ENCODE measurements at regions of chr4 and their contacts with region 1.

Region 1: DNA sequence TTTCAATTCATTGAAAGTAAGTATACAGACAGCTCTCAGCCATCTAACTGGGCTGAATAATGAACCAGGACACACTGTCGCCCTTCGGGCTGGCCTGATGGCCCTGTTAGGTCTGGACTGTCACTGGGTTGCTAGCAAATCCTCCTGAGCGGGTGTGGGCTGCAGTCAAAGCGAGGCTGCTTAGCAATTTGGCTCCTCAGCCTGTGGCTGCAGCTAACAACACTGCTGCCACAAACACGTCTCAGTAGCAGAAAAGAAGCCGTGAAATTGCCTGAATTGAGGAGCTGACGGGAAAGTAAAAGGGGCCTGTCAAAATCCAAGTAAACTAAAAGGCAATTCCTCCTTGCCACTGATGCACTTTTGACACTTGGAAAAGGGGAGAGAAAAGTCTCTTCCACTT is 72.8 kb downstream of the SMIM20 start:
- DNase-seq: no peak
- ATAC-seq: no peak
- H3K4me3 ChIP-seq: no peak overlapping the region
- H3K27ac ChIP-seq: no peak overlapping the region
- H3K4me1 ChIP-seq: peaks cover 5% of the 10 kb centered on the region
- H3K27me3 ChIP-seq: no peaks in the 10 kb centered on the region
- CTCF ChIP-seq: no peak
- EP300 ChIP-seq: no peak
- POLR2A ChIP-seq: no peak
- RAD21 ChIP-seq: no peak

Region 2: DNA sequence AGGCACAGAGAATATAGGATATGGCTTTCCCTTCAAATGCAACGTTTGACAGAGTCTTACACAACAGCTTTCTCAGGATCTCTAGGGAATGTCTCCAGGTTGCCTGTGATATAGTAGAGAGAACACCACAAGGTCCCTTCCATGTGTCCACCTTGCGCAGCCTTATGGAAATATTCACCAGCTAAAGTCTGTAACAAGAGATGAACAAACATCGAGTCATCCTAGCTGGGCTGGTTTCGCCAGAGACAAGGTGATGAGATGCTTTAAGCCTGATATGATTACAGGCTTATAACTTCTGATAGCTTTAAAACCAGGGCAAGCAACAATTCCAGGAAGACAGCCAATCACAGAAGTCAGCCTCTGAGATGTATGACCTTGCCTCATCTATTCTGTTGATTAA is 207.8 kb before region 1 on chr4:
- CTCF ChIA-PET with region 1: no interaction called
- POLR2A ChIA-PET with region 1: no interaction called
- RAD21 ChIA-PET with region 1: no interaction called
- SMC1A ChIA-PET with region 1: no interaction called
- in situ Hi-C with region 1: no loop called
- intact Hi-C with region 1: no loop called
- DNase-seq: no peak
- ATAC-seq: no peak
- H3K4me3 ChIP-seq: no peak overlapping the region
- H3K27ac ChIP-seq: no peak overlapping the region
- H3K4me1 ChIP-seq: no peaks in the 10 kb centered on the region
- H3K27me3 ChIP-seq: no peaks in the 10 kb centered on the region
- CTCF ChIP-seq: no peak
- EP300 ChIP-seq: no peak
- POLR2A ChIP-seq: no peak
- RAD21 ChIP-seq: no peak

Region 3: GRCh38 chr4:25813448-25814106 is 173.2 kb before region 1 on chr4:
- CTCF ChIA-PET with region 1: no interaction called
- POLR2A ChIA-PET with region 1: no interaction called
- RAD21 ChIA-PET with region 1: no interaction called
- SMC1A ChIA-PET with region 1: no interaction called
- in situ Hi-C with region 1: no loop called
- intact Hi-C with region 1: no loop called
- DNase-seq: no peak
- ATAC-seq: no peak
- H3K4me3 ChIP-seq: no peak overlapping the region
- H3K27ac ChIP-seq: no peak overlapping the region
- H3K4me1 ChIP-seq: no peaks in the 10 kb centered on the region
- H3K27me3 ChIP-seq: no peaks in the 10 kb centered on the region
- CTCF ChIP-seq: no peak
- EP300 ChIP-seq: no peak
- POLR2A ChIP-seq: no peak
- RAD21 ChIP-seq: no peak

Region 4: GRCh38 chr4:25842229-25842845 is 144.5 kb before region 1 on chr4:
- CTCF ChIA-PET with region 1: interaction called, 17 read pairs
- POLR2A ChIA-PET with region 1: interaction called, 5 read pairs
- RAD21 ChIA-PET with region 1: interaction called, 20 read pairs
- SMC1A ChIA-PET with region 1: interaction called, 11 read pairs
- in situ Hi-C with region 1: no loop called
- intact Hi-C with region 1: loop called (anchors 2 kb)
- DNase-seq: peak; percentile 21
- ATAC-seq: peak; percentile 80
- H3K4me3 ChIP-seq: no peak overlapping the region
- H3K27ac ChIP-seq: no peak overlapping the region
- H3K4me1 ChIP-seq: peaks cover 31% of the 10 kb centered on the region
- H3K27me3 ChIP-seq: no peaks in the 10 kb centered on the region
- CTCF ChIP-seq: peak; percentile 43 to 53 (median 47); a peak in 5 of 6 replicates
- EP300 ChIP-seq: no peak
- POLR2A ChIP-seq: no peak
- RAD21 ChIP-seq: peak; percentile 85

Region 5: GRCh38 chr4:25938787-25939186 is 48.0 kb before region 1 on chr4:
- CTCF ChIA-PET with region 1: interaction called, 7 read pairs
- POLR2A ChIA-PET with region 1: no interaction called
- RAD21 ChIA-PET with region 1: no interaction called
- SMC1A ChIA-PET with region 1: interaction called, 11 read pairs
- in situ Hi-C with region 1: no loop called
- intact Hi-C with region 1: no loop called
- DNase-seq: peak; percentile 85
- ATAC-seq: peak; percentile 96
- H3K4me3 ChIP-seq: no peak overlapping the region; the same call in 1 of the 2 replicates
- H3K27ac ChIP-seq: no peak overlapping the region; the same call in 1 of the 2 replicates
- H3K4me1 ChIP-seq: peaks cover 11% of the 10 kb centered on the region; the same call in 1 of the 2 replicates
- H3K27me3 ChIP-seq: no peaks in the 10 kb centered on the region
- CTCF ChIP-seq: no peak
- EP300 ChIP-seq: peak in 1 of 2 experiments; percentile 50; a peak in 1 of 4 replicates
- POLR2A ChIP-seq: no peak
- RAD21 ChIP-seq: no peak

Region 6: DNA sequence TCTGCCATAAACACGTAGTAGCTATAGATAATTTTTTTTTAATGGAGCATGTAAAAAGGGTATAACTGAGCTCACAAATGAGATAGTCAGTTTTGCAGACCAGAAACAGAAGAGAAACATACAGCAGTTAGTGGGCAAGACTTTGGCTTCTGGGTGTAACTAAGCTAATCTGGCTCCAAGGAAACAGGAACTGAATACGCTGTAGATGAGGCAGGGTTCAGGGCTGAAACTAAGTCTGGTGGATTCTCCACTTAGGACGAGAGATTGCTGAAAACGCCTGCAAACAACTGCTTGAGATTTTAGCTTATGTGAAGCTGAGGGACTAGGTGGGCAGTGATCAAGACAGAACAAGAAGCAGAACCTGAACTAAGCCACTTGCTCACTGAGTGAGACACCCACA is 19.0 kb after region 1 on chr4:
- CTCF ChIA-PET with region 1: interaction called, 23 read pairs
- POLR2A ChIA-PET with region 1: no interaction called
- RAD21 ChIA-PET with region 1: interaction called, 4 read pairs
- SMC1A ChIA-PET with region 1: interaction called, 3 read pairs
- in situ Hi-C with region 1: no loop called
- intact Hi-C with region 1: no loop called
- DNase-seq: no peak
- ATAC-seq: no peak
- H3K4me3 ChIP-seq: no peak overlapping the region
- H3K27ac ChIP-seq: no peak overlapping the region
- H3K4me1 ChIP-seq: no peaks in the 10 kb centered on the region
- H3K27me3 ChIP-seq: no peaks in the 10 kb centered on the region
- CTCF ChIP-seq: no peak
- EP300 ChIP-seq: no peak
- POLR2A ChIP-seq: no peak
- RAD21 ChIP-seq: no peak

Region 7: GRCh38 chr4:26124753-26125321 is 138.0 kb after region 1 on chr4:
- CTCF ChIA-PET with region 1: no interaction called
- POLR2A ChIA-PET with region 1: no interaction called
- RAD21 ChIA-PET with region 1: no interaction called
- SMC1A ChIA-PET with region 1: no interaction called
- in situ Hi-C with region 1: no loop called
- intact Hi-C with region 1: no loop called
- DNase-seq: no peak
- ATAC-seq: no peak
- H3K4me3 ChIP-seq: no peak overlapping the region
- H3K27ac ChIP-seq: no peak overlapping the region
- H3K4me1 ChIP-seq: peaks cover 16% of the 10 kb centered on the region
- H3K27me3 ChIP-seq: no peaks in the 10 kb centered on the region
- CTCF ChIP-seq: no peak
- EP300 ChIP-seq: no peak
- POLR2A ChIP-seq: no peak
- RAD21 ChIP-seq: no peak

Region 8: DNA sequence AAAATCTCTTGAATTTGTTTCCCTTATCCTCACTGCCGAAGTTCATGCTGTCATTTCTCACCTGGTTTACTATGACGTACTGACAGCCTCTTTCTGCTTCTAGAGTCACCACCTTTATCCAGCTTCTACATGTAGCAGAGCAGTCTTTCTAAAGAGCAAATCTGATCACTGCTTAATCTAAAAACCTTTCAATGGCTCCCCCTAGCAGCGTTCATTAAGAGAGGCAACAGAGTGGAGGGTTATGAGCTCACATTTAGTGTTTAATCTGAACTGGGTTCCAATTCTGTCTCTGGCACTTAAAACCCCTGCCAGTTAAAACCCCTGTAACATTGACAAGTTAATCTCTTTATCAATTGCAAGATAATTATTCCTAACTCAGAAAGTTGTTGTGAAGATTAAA is 338.4 kb after region 1 on chr4:
- CTCF ChIA-PET with region 1: interaction called, 39 read pairs
- POLR2A ChIA-PET with region 1: no interaction called
- RAD21 ChIA-PET with region 1: interaction called, 12 read pairs
- SMC1A ChIA-PET with region 1: interaction called, 4 read pairs
- in situ Hi-C with region 1: no loop called
- intact Hi-C with region 1: loop called (anchors 5 kb)
- DNase-seq: no peak
- ATAC-seq: peak; percentile 63
- H3K4me3 ChIP-seq: peak overlapping the region; percentile 10; the same call in 1 of the 2 replicates
- H3K27ac ChIP-seq: no peak overlapping the region
- H3K4me1 ChIP-seq: no peaks in the 10 kb centered on the region
- H3K27me3 ChIP-seq: no peaks in the 10 kb centered on the region
- CTCF ChIP-seq: peak; percentile 46 to 64 (median 56); a peak in 5 of 6 replicates
- EP300 ChIP-seq: no peak
- POLR2A ChIP-seq: no peak
- RAD21 ChIP-seq: peak; percentile 78